Calu3 (cell line): ENCODE measurements at regions of chr11 and their contacts with region 1.

Region 1: DNA sequence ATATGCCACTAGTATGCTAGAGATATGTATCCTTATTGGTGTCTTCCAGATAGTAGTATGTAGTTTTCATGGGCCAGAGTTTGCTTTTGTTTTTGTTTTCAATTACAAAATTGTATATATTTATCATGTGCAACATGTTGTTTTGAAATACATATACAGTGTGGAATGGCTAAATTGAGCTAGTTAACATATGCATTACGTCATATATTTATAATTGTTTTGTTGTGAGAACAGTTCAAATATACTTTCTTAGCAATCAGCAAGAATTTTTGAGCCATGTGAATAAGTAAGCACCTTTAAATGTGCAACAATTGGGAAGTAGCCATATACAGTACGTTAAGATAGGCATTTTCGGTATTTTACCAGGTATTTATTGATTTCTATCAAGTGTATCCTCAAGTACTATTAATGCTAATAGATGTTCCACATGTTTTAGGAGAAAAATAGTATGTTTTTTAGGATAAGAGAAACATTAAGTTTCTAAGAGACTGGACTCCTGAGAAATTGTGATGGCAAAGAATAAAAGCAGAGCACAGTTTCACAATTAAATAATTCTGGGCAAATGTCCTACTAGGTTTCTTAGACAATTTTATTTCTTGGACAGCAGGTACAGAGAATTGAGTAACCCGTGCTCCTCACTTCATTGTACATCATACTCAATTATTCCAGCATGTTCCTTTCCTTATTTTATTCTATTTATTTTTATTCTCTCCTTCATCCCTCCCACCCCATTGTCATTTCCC is 60.5 kb upstream of the SLC5A12 start:
- DNase-seq: no peak
- H3K4me3 Mint-ChIP-seq: no peak overlapping the region
- H3K27ac Mint-ChIP-seq: no peak overlapping the region
- H3K4me1 Mint-ChIP-seq: no peaks in the 10 kb centered on the region
- H3K27me3 Mint-ChIP-seq: no peaks in the 10 kb centered on the region
- CTCF ChIP-seq: no peak

Region 2: GRCh38 chr11:26331911-26332571 is 450.4 kb before region 1 on chr11 and contains the start of gene ANO3:
- CTCF ChIA-PET with region 1: no interaction called
- intact Hi-C with region 1: no loop called
- DNase-seq: peak; percentile 88
- H3K4me3 Mint-ChIP-seq: peak within 1 kb of the TSS; percentile 63
- H3K27ac Mint-ChIP-seq: peak within 1 kb of the TSS; percentile 11
- H3K4me1 Mint-ChIP-seq: peaks cover 33% of the 10 kb centered on the region
- H3K27me3 Mint-ChIP-seq: no peaks in the 10 kb centered on the region
- CTCF ChIP-seq: peak; percentile 74
- total RNA-seq, gene ANO3: not detected in 2 replicates

Region 3: GRCh38 chr11:26792941-26793340 is 10.5 kb after region 1 on chr11:
- CTCF ChIA-PET with region 1: no interaction called
- intact Hi-C with region 1: no loop called
- DNase-seq: no peak
- H3K4me3 Mint-ChIP-seq: no peak overlapping the region
- H3K27ac Mint-ChIP-seq: no peak overlapping the region
- H3K4me1 Mint-ChIP-seq: no peaks in the 10 kb centered on the region
- H3K27me3 Mint-ChIP-seq: no peaks in the 10 kb centered on the region
- CTCF ChIP-seq: no peak

Region 4: GRCh38 chr11:27150098-27150497 is 367.7 kb after region 1 on chr11:
- CTCF ChIA-PET with region 1: interaction called, 13 read pairs
- intact Hi-C with region 1: no loop called
- DNase-seq: no peak
- H3K4me3 Mint-ChIP-seq: no peak overlapping the region
- H3K27ac Mint-ChIP-seq: no peak overlapping the region
- H3K4me1 Mint-ChIP-seq: no peaks in the 10 kb centered on the region
- H3K27me3 Mint-ChIP-seq: no peaks in the 10 kb centered on the region
- CTCF ChIP-seq: no peak